ENCODE measurements at regions of chr3 and their contacts with region 1.

Region 1: DNA sequence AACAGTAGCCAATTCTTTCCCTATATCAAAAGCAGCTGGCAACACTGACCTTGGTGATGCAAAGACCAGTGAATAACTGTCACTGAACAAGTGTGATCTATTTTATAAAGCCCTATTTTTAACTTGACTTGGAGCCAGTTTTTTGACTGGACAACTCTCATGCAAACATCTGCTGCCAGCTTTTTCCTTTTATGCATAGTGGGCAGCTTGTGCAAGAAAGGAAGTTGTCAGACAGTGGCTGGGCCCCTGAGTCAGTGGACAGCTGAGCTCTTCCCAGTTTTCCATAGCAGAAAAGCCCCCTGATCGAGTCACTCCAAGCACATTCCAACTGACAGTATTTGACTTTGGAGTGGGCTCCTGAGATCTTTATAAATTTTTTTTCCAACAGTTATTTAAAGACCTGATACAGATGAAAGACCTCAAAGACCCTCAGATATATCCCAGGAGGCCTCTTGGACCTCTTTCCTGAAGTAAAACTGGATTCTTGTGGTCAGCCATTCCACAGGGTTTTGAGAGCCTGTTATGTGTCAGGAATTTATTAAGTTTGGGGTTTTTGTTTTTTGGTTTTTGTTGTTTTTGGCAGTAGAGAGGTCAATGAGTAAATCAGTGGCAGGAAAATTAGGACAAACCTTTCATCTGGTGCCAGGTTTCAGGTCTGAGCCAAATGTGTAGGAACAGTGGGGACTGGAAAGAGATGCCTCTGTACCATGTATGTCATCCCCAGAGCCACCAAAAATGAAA is 520.2 kb upstream of the MDFIC2 start:
- DNase-seq: peak in 1 of 2 donors; percentile 42
- ATAC-seq: peak; percentile 81 to 86
- H3K4me3 ChIP-seq: no peak overlapping the region
- H3K27ac ChIP-seq: peak overlapping the region; percentile 20 to 56 (median 55)
- H3K4me1 ChIP-seq: peaks cover 10 to 21% of the 10 kb centered on the region in 2 donors
- H3K27me3 ChIP-seq: no peaks in the 10 kb centered on the region
- CTCF ChIP-seq: no peak
- POLR2A ChIP-seq: peak in 1 of 2 donors; percentile 13

Region 2: DNA sequence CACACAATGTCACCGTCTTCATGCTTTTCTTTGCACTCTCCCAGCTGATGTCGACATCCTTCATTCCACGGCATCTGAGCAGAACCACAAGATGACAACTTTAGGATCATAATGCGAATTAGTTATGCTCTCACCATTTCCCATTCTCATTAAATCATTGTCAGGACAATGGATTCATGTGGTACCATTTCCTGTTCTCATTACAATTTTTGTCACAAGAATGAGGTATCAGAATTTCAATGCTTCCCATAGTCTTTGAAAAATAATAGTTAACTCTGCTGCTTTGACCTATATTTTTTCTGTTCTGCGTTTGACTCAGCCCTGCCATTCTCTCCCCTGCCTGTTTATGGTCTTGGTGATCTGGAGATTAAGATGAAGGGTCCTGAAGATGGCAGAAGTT is 344.5 kb before region 1 on chr3:
- in situ Hi-C with region 1: no loop called
- intact Hi-C with region 1: no loop called
- DNase-seq: no peak
- ATAC-seq: no peak
- H3K4me3 ChIP-seq: no peak overlapping the region
- H3K27ac ChIP-seq: no peak overlapping the region
- H3K4me1 ChIP-seq: no peaks in the 10 kb centered on the region
- H3K27me3 ChIP-seq: no peaks in the 10 kb centered on the region
- CTCF ChIP-seq: no peak
- POLR2A ChIP-seq: no peak

Region 3: GRCh38 chr3:70889162-70890019 is 56.8 kb after region 1 on chr3:
- in situ Hi-C with region 1: no loop called
- intact Hi-C with region 1: loop called (anchors 2 kb)
- DNase-seq: peak; percentile 2 to 28
- ATAC-seq: peak; percentile 96 to 97
- H3K4me3 ChIP-seq: no peak overlapping the region
- H3K27ac ChIP-seq: peak overlapping the region; percentile 58 to 78 (median 68)
- H3K4me1 ChIP-seq: peaks cover 0 to 11% of the 10 kb centered on the region in 2 donors
- H3K27me3 ChIP-seq: no peaks in the 10 kb centered on the region
- CTCF ChIP-seq: no peak
- POLR2A ChIP-seq: no peak

Region 4: GRCh38 chr3:71006810-71007785 is 174.5 kb after region 1 on chr3:
- in situ Hi-C with region 1: no loop called
- intact Hi-C with region 1: no loop called
- DNase-seq: no peak
- ATAC-seq: peak; percentile 77 to 80
- H3K4me3 ChIP-seq: peak overlapping the region in 1 of 4 donors; percentile 27
- H3K27ac ChIP-seq: peak overlapping the region; percentile 48 to 69 (median 52)
- H3K4me1 ChIP-seq: peaks cover 49 to 57% of the 10 kb centered on the region in 2 donors
- H3K27me3 ChIP-seq: no peaks in the 10 kb centered on the region
- CTCF ChIP-seq: peak in 4 of 5 experiments; percentile 27 to 65 (median 45)
- POLR2A ChIP-seq: no peak